CD14-positive monocyte (primary cell): ENCODE measurements at regions of chr11 and their contacts with region 1.

Region 1: GRCh38 chr11:76371170-76371569 is 9.8 kb downstream of the THAP12 start:
- DNase-seq: peak; percentile 22 to 77 (median 27)
- H3K4me3 ChIP-seq: no peak overlapping the region
- H3K4me3 Mint-ChIP-seq: no peak overlapping the region
- H3K27ac ChIP-seq: no peak overlapping the region
- H3K27ac Mint-ChIP-seq: peak overlapping the region; percentile 18 to 42 (median 33)
- H3K4me1 ChIP-seq: peaks cover 8 to 19% of the 10 kb centered on the region in 2 donors
- H3K4me1 Mint-ChIP-seq: peaks cover 30% of the 10 kb centered on the region
- H3K27me3 ChIP-seq: no peaks in the 10 kb centered on the region
- H3K27me3 Mint-ChIP-seq: peaks cover 0 to 1% (median 0%) of the 10 kb centered on the region in 3 donors
- CTCF ChIP-seq: no peak

Region 2: GRCh38 chr11:76329084-76329984 is 41.8 kb before region 1 on chr11:
- intact Hi-C with region 1: loop called in 1 of 2 experiments (anchors 10 kb)
- DNase-seq: no peak
- H3K4me3 ChIP-seq: no peak overlapping the region
- H3K4me3 Mint-ChIP-seq: no peak overlapping the region
- H3K27ac ChIP-seq: no peak overlapping the region
- H3K27ac Mint-ChIP-seq: no peak overlapping the region
- H3K4me1 ChIP-seq: peaks cover 18 to 25% of the 10 kb centered on the region in 2 donors
- H3K4me1 Mint-ChIP-seq: peaks cover 22% of the 10 kb centered on the region
- H3K27me3 ChIP-seq: no peaks in the 10 kb centered on the region
- H3K27me3 Mint-ChIP-seq: peaks cover 0 to 2% (median 0%) of the 10 kb centered on the region in 3 donors
- CTCF ChIP-seq: no peak